CD4-positive, alpha-beta memory T cell (primary cell): ENCODE measurements at regions of chr1 and their contacts with region 1.

Region 1: GRCh38 chr1:200738740-200739498 is at the start of gene CAMSAP2:
- DNase-seq: peak; percentile 62 to 75 (median 68)
- H3K4me3 ChIP-seq: peak within 1 kb of the TSS; percentile 37 to 76
- H3K4me3 Mint-ChIP-seq: peak within 1 kb of the TSS; percentile 95 to 98 (median 98)
- H3K27ac ChIP-seq: peak within 1 kb of the TSS; percentile 60
- H3K27ac Mint-ChIP-seq: peak within 1 kb of the TSS; percentile 86 to 98 (median 94)
- H3K4me1 ChIP-seq: peaks cover 29% of the 10 kb centered on the region
- H3K4me1 Mint-ChIP-seq: peaks cover 23 to 41% (median 30%) of the 10 kb centered on the region in 4 donors
- H3K27me3 ChIP-seq: no peaks in the 10 kb centered on the region
- H3K27me3 Mint-ChIP-seq: no peaks in the 10 kb centered on the region
- total RNA-seq, gene CAMSAP2: 6.1 to 7.5 TPM

Region 2: DNA sequence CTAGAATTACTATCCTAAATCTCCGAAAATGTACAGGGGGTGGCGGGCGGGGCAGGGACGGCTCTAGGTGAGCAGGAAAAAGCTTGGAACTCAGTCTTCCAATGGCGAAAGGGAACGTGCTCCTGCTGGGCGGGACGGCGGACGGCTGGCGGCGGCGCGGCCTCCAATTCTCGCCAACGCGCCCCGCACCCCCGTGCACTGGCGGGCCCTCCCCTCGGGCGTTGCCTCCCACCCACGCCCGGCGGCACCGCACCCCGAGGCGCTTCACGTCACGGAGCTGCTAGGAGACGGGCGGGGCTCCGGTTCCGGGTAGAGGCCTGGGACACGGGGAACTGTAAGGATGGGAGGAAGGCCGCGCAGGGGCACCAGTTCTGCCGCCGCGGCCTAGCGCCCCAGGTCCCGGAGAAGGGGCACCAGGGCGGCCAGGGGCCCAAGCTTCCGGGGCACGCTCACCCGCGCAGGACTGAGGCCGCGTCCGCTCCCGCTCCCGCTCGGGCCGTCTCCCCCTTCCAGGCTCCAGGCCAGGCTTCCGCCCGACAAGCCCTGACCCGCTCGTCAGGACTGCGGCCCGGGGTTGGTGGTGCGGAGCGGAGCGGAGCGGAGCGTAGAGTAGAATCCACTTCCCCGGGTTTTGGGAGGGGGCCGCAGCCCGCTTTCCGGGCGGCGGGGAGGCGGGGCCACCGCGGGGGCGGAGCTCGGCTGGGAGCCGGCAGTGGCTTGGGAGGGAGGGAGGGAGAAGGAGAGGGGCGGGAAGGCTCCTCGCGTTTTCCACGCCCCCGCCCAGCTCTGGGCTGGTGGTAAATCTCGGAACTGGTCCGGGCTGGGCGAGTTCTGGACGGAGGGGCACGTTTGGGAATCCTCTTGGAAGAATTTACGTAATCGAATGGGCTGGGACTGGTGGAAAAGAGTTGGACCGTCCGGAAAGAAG is 69.3 kb before region 1 on chr1 and contains the start of gene DDX59:
- CTCF ChIA-PET with region 1: interaction called, 3 read pairs
- POLR2A ChIA-PET with region 1: interaction called, 19 read pairs
- intact Hi-C with region 1: loop called (anchors 1 kb)
- DNase-seq: peak; percentile 85 to 92 (median 87)
- H3K4me3 ChIP-seq: peak within 1 kb of the TSS; percentile 57 to 95
- H3K4me3 Mint-ChIP-seq: peak within 1 kb of the TSS; percentile 95 to 99 (median 98)
- H3K27ac ChIP-seq: peak within 1 kb of the TSS; percentile 98
- H3K27ac Mint-ChIP-seq: peak within 1 kb of the TSS; percentile 95 to 99 (median 98)
- H3K4me1 ChIP-seq: peaks cover 39% of the 10 kb centered on the region
- H3K4me1 Mint-ChIP-seq: peaks cover 29 to 57% (median 41%) of the 10 kb centered on the region in 4 donors
- H3K27me3 ChIP-seq: no peaks in the 10 kb centered on the region
- H3K27me3 Mint-ChIP-seq: no peaks in the 10 kb centered on the region
- total RNA-seq, gene DDX59: 37.0 to 37.5 TPM

Region 3: DNA sequence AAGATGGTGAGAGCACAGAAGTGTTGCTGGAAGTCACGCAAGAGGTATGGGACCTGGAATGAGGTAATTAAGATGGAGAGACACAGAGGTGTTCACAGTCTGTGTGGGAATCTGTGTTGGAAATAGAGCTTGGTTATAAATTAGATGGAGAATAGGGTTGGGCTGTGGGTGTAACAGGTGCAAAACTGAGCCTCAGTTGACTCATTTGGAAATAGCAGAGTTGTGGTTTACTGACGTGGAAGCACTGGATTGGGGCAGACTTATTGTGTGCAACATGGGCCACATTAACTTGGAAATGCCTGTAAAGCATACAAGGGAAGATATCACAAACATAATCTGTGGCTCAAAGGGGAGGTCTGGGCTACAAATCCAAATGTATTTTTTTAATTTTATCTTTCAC is 12.8 kb after region 1 on chr1:
- CTCF ChIA-PET with region 1: no interaction called
- POLR2A ChIA-PET with region 1: no interaction called
- intact Hi-C with region 1: no loop called
- DNase-seq: no peak
- H3K4me3 ChIP-seq: no peak overlapping the region
- H3K4me3 Mint-ChIP-seq: no peak overlapping the region
- H3K27ac ChIP-seq: no peak overlapping the region
- H3K27ac Mint-ChIP-seq: peak overlapping the region in 2 of 7 donors; percentile 2 to 66
- H3K4me1 ChIP-seq: no peaks in the 10 kb centered on the region
- H3K4me1 Mint-ChIP-seq: peaks cover 0 to 6% (median 4%) of the 10 kb centered on the region in 4 donors
- H3K27me3 ChIP-seq: no peaks in the 10 kb centered on the region
- H3K27me3 Mint-ChIP-seq: no peaks in the 10 kb centered on the region